PC-3 (cell line): ENCODE measurements at regions of chr6 and their contacts with region 1.

Region 1: DNA sequence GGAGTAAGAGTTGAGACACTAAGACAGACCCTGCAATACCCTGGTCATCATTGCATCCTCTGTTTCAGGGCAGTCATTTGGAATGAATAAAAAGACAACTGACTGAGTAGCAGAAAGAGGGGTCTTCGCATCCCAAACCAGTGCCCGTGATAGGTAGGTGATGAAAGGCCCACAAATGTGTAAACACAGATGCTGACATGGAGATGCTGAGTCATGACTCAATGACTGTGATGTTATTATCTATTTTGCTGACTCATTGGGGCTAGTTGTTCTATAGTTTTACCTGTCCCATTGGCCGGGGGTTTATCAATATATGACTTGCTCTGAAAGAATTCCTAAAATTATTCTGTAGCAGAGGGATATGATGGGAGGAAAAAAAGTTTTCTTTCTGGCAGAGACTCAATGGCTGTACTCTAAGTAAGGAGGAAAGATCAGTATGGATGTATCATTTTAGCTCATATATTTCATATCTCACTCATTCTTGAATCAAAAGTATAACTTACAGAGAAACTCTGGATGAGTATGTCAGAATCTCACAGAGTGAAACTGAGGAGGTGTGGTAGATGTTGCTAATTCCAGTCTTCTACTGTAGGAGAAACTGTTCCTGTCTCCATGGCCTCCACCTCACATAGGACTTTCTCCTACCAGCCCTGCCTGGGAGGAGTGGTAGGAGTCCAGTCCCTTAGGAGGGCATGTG is 119.9 kb upstream of the PREP start:
- DNase-seq: peak; percentile 66
- ATAC-seq: no peak
- H3K4me3 ChIP-seq: no peak overlapping the region
- H3K27ac ChIP-seq: peak overlapping the region; percentile 13; the same call in 1 of the 2 replicates
- H3K4me1 ChIP-seq: peaks cover 20% of the 10 kb centered on the region
- H3K27me3 ChIP-seq: no peaks in the 10 kb centered on the region
- CTCF ChIP-seq: no peak

Region 2: DNA sequence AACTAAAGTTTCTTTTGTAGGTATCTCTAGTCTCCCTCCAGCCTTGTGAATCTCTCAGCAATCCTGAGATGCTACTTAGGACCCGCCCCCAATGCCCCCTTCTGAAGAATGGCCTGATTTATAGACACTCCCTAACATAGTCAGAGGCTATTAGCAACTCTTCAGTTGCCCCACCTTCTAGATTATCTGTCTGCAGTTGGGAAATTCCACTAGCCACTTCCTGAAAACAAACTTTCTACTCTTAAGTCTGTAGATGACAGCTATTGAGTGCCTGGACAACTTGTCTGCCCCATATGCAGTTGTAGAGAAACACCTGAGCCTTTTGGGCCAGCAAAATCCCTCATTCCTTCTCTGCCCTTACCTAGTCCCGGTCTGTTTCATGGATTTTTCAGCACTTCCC is 68.3 kb after region 1 on chr6:
- CTCF ChIA-PET with region 1: interaction called, 6 read pairs
- POLR2A ChIA-PET with region 1: no interaction called
- intact Hi-C with region 1: loop called (anchors 10 kb)
- DNase-seq: peak; percentile 53
- ATAC-seq: no peak
- H3K4me3 ChIP-seq: no peak overlapping the region
- H3K27ac ChIP-seq: peak overlapping the region; percentile 99
- H3K4me1 ChIP-seq: peaks cover 81% of the 10 kb centered on the region
- H3K27me3 ChIP-seq: no peaks in the 10 kb centered on the region
- CTCF ChIP-seq: no peak